Activated CD8-positive, alpha-beta T cell treated with anti-CD3 and anti-CD28 coated beads for 36 hours (primary cell): ENCODE measurements at regions of chr11 and their contacts with region 1.

Region 1: GRCh38 chr11:44286268-44286880 is 23.6 kb downstream of the ALX4 start:
- DNase-seq: peak; percentile 62
- ATAC-seq: peak; percentile 91
- H3K4me3 Mint-ChIP-seq: no peak overlapping the region
- H3K27ac Mint-ChIP-seq: no peak overlapping the region
- H3K4me1 Mint-ChIP-seq: no peaks in the 10 kb centered on the region
- H3K27me3 Mint-ChIP-seq: peaks cover 5% of the 10 kb centered on the region
- CTCF ChIP-seq: peak; percentile 93

Region 2: DNA sequence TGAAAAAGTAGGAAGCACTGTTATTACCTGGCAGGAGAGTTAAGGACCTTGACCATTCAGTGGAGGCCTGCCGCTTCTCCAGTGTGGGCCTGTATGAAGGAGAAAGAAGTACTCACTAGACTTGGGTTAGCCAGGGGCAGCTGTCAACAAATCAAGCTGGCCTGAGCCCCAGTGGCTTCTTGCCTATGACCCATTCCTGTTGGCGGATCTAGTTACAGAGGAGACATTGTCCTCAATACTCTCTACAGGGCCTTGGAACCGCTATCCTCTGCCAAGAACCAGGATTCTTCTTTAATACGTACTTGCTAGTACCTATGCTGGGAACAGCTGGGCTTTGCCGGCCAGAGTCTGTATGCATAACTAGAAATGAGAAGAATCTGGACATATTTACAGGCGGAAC is 44.5 kb before region 1 on chr11:
- CTCF ChIA-PET with region 1: no interaction called
- POLR2A ChIA-PET with region 1: no interaction called
- intact Hi-C with region 1: no loop called
- DNase-seq: no peak
- ATAC-seq: no peak
- H3K4me3 Mint-ChIP-seq: no peak overlapping the region
- H3K27ac Mint-ChIP-seq: no peak overlapping the region
- H3K4me1 Mint-ChIP-seq: no peaks in the 10 kb centered on the region
- H3K27me3 Mint-ChIP-seq: no peaks in the 10 kb centered on the region
- CTCF ChIP-seq: no peak

Region 3: DNA sequence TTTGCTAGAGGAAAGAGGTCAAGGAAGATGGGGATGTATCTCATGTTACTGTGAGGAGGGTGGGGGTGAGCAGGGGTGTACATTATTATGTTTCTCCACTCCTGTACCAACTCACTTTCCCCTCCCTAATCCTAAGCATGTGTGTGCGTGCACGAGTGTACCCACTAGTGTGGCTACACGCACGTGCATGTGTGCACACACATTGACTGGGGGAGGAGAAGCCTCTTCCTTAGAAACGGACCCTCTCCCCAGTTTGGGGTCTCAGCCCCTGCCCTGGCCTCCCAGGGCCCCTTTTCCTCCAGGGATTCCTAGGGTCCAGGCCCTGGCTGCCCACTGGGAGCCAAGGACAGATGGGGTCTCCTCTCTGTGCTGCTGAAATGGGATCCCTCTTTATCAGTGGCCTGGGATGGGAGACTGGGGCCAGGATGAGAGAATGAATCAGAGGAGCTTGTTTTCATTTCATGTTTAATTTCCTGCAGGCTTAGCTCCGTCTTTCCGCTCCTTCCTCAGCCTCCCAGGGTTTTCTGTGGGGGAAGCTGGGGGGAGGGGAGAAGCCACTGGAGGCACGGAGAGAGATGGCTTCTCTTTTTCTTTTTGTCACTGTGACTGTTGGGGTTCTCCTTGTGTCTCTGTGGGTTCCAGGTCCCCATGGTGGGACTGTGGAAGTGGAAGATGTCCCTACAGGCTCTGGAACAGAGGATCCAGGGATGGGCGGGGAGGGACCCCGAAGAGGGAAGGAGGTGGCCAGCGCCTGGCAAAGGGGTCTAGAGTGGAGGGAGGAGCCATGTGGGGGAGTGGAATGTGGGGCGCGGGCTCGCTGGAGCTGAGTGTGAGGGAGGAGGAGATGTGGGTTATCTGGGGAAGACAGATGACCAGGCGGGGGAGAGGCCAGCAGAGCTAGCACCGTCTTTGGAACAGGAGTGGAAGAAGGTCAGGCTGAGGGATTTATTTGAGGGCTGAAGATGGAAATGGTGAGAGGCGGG is 16.7 kb before region 1 on chr11:
- CTCF ChIA-PET with region 1: interaction called, 10 read pairs
- POLR2A ChIA-PET with region 1: no interaction called
- intact Hi-C with region 1: no loop called
- DNase-seq: no peak
- ATAC-seq: no peak
- H3K4me3 Mint-ChIP-seq: no peak overlapping the region
- H3K27ac Mint-ChIP-seq: no peak overlapping the region
- H3K4me1 Mint-ChIP-seq: no peaks in the 10 kb centered on the region
- H3K27me3 Mint-ChIP-seq: no peaks in the 10 kb centered on the region
- CTCF ChIP-seq: no peak

Region 4: GRCh38 chr11:44445500-44446365 is 159.4 kb after region 1 on chr11:
- CTCF ChIA-PET with region 1: no interaction called
- POLR2A ChIA-PET with region 1: no interaction called
- intact Hi-C with region 1: no loop called
- DNase-seq: no peak
- ATAC-seq: no peak
- H3K4me3 Mint-ChIP-seq: no peak overlapping the region
- H3K27ac Mint-ChIP-seq: no peak overlapping the region
- H3K4me1 Mint-ChIP-seq: no peaks in the 10 kb centered on the region
- H3K27me3 Mint-ChIP-seq: peaks cover 10% of the 10 kb centered on the region
- CTCF ChIP-seq: no peak